Activated naive CD4-positive, alpha-beta T cell treated with anti-CD3 and anti-CD28 coated beads, Interleukin-2, amount 10 ng/mL, durations not matched to agents 7 days and 5 days (primary cell): ENCODE measurements at regions of chr22 and their contacts with region 1.

Region 1: GRCh38 chr22:25334162-25334490 is 114.7 kb downstream of the CRYBB2 start:
- DNase-seq: peak; percentile 80
- H3K4me3 Mint-ChIP-seq: no peak overlapping the region
- H3K27ac Mint-ChIP-seq: no peak overlapping the region
- H3K4me1 Mint-ChIP-seq: no peaks in the 10 kb centered on the region
- H3K27me3 Mint-ChIP-seq: peaks cover 18% of the 10 kb centered on the region

Region 2: GRCh38 chr22:24871611-24872184 is 462.4 kb before region 1 on chr22:
- CTCF ChIA-PET with region 1: no interaction called
- DNase-seq: no peak
- H3K4me3 Mint-ChIP-seq: no peak overlapping the region
- H3K27ac Mint-ChIP-seq: no peak overlapping the region
- H3K4me1 Mint-ChIP-seq: no peaks in the 10 kb centered on the region
- H3K27me3 Mint-ChIP-seq: no peaks in the 10 kb centered on the region

Region 3: GRCh38 chr22:25081409-25081824 is 252.7 kb before region 1 on chr22:
- CTCF ChIA-PET with region 1: interaction called, 14 read pairs
- DNase-seq: peak; percentile 74
- H3K4me3 Mint-ChIP-seq: no peak overlapping the region
- H3K27ac Mint-ChIP-seq: no peak overlapping the region
- H3K4me1 Mint-ChIP-seq: peaks cover 59% of the 10 kb centered on the region
- H3K27me3 Mint-ChIP-seq: no peaks in the 10 kb centered on the region

Region 4: DNA sequence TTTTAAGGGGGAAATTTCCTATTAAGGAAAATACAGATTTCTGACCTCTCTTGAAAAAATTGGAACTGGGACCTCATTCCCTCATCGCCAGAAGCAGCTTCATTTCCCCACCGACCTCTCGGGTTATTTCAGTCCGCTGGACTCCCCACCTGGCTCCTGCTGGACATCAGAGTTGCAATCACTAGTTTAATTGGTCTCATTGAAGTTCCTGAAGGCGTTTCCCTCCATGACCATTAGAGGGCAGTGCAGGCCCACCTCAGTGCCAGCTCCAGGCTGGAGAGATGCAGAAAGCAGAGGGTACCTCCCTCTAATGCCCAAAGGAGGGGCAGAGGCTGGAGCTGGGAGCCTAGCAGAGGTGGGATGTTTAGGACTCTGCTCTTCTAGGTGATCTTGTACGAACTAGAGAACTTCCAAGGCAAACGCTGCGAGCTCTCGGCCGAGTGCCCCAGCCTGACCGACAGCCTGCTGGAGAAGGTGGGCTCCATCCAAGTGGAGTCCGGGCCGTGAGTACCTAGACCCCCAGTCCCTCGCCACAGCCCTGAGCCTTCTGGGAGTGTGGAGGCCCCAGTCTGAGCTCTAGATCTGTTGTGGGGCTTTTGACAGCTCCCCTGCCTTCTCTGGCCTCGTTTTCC is 131.7 kb before region 1 on chr22:
- CTCF ChIA-PET with region 1: interaction called, 11 read pairs
- DNase-seq: peak; percentile 70
- H3K4me3 Mint-ChIP-seq: no peak overlapping the region
- H3K27ac Mint-ChIP-seq: no peak overlapping the region
- H3K4me1 Mint-ChIP-seq: no peaks in the 10 kb centered on the region
- H3K27me3 Mint-ChIP-seq: no peaks in the 10 kb centered on the region

Region 5: GRCh38 chr22:25235547-25236290 is 98.4 kb before region 1 on chr22:
- CTCF ChIA-PET with region 1: interaction called, 10 read pairs
- DNase-seq: peak; percentile 84
- H3K4me3 Mint-ChIP-seq: no peak overlapping the region
- H3K27ac Mint-ChIP-seq: no peak overlapping the region
- H3K4me1 Mint-ChIP-seq: no peaks in the 10 kb centered on the region
- H3K27me3 Mint-ChIP-seq: peaks cover 38% of the 10 kb centered on the region

Region 6: DNA sequence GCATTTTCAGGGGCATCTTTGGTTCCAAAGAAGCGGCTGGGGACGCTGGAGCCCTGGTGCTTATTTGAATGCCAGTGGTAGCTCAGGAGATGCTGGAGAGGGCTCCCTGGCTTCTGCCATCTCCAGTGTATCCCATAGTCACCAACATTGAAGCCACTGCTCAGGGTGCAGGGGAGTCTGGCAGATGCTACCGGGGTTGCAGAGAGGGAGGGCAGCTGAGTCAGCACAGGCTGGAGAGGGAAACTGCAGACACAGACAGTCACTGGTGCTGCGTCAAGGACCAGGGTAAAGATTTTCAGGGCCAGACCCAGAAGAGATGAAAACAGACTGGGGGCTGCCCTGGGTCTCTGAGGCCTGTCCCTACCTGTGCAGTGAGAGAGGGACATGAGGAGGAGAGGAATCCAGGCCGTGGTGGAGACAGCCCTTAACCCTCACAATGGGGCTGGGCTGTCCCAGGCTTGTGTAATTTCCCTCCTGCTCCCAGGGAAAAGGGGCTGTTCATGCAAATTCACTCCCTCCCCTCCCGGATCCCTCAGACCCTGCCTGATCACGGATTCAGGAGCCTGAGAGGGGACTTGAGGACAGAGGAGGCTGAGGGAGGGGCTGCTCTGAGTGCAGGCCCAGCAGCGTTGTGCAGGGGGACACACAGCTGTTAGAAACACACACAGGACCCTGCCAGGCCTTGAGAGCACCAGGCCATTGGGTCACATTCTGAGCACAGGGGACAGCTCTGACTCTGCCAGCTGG is 103.5 kb after region 1 on chr22:
- CTCF ChIA-PET with region 1: no interaction called
- DNase-seq: no peak
- H3K4me3 Mint-ChIP-seq: no peak overlapping the region
- H3K27ac Mint-ChIP-seq: no peak overlapping the region
- H3K4me1 Mint-ChIP-seq: peaks cover 4% of the 10 kb centered on the region
- H3K27me3 Mint-ChIP-seq: peaks cover 23% of the 10 kb centered on the region

Region 7: DNA sequence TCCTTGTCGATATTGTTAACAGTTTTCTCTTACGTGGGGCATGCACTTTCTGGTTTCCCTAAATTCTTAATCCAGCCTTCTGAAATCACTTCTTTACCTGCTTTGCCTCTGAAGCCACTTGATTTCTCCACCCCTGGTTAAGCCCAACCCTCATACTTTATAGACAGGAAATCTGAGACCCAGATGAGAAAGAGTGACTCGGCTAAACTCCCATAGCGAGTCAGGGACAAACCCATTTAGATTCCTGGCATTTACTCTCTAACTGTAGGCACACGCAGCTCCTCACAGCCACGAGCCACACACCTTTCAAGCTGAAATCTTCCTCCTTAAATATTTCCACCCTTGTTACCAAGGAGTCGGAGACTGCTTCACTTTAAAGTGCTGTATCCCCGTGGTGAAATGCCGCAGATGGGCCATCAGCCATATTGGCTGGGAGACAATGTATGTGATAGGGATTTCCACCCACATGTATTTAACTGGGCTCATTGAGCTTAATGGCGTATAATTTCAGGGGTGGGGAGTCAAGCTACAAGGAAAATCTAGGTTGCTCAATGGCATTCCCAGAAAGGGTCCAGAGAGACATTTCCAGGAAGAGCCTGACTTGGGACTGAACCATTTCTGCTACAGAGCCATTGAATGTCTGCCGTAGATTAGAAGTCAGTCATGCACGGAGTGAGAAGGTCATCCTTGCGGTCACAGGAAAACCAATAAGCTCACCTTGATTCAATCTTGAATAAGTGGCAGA is 180.5 kb after region 1 on chr22:
- CTCF ChIA-PET with region 1: no interaction called
- DNase-seq: no peak
- H3K4me3 Mint-ChIP-seq: no peak overlapping the region
- H3K27ac Mint-ChIP-seq: no peak overlapping the region
- H3K4me1 Mint-ChIP-seq: no peaks in the 10 kb centered on the region
- H3K27me3 Mint-ChIP-seq: no peaks in the 10 kb centered on the region